ENCODE measurements at regions of chr13 and their contacts with region 1.

Region 1: DNA sequence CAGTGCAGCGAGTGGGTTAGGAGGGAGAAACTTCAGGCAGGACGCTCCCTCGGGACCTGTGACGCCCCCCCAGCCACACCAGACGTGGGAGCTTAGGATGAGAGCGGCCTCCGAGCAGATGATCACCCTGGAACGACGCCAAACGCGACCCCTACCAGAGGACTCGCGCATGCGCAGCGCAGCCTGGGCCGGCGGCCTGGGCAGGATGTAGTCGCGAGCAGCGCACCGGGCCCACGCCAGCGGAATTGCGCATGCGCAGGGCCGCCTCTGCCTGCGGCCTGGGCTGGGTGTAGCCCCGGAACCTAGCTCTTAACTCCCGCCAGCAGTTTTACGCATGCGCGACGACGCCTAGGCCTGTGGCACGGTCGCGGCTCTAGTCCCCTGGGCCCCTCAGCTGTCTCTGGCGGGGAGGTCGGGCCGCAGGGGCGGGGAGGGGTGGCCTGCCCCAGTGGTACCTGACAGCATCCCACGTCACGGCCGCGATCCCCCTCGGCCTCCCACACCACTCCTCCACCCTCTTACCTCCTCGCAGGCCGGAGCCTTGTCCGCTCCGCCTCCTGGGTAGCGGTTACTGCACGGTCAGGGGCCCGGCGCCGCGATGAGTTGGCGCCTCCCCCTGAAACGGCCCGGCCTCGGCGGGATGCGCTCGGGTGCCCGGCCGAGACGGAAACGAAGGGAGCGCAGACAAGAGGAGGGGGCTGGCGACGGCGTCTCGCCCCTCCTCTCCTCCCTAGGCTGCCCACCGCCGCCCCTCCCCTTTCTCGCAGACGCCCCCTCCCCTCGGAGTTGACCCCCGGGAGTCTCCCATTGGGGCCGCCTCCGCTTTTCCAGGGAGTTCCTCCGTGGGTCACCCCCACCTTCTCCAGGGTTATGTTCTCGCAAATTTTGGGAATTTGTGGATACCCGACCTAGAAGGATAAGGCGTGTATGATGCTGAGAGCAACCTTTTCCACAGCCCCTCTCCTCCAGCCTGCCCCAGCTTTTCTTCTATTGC is at the start of gene RCBTB2:
- DNase-seq: peak; percentile 99
- H3K4me3 Mint-ChIP-seq: peak within 1 kb of the TSS; percentile 91
- H3K27ac Mint-ChIP-seq: peak within 1 kb of the TSS; percentile 98
- H3K4me1 Mint-ChIP-seq: peaks cover 32% of the 10 kb centered on the region
- H3K27me3 Mint-ChIP-seq: peaks cover 7% of the 10 kb centered on the region
- total RNA-seq, gene RCBTB2: 1.7 and 2.0 TPM in 2 replicates

Region 2: GRCh38 chr13:48094781-48095502 is 437.9 kb before region 1 on chr13 and contains the start of gene MED4:
- intact Hi-C with region 1: loop called (anchors 2 kb)
- DNase-seq: peak; percentile 98
- H3K4me3 Mint-ChIP-seq: peak within 1 kb of the TSS; percentile 98
- H3K27ac Mint-ChIP-seq: peak within 1 kb of the TSS; percentile 90
- H3K4me1 Mint-ChIP-seq: peaks cover 36% of the 10 kb centered on the region
- H3K27me3 Mint-ChIP-seq: peaks cover 5% of the 10 kb centered on the region
- total RNA-seq, gene MED4: 64.2 and 65.6 TPM in 2 replicates

Region 3: DNA sequence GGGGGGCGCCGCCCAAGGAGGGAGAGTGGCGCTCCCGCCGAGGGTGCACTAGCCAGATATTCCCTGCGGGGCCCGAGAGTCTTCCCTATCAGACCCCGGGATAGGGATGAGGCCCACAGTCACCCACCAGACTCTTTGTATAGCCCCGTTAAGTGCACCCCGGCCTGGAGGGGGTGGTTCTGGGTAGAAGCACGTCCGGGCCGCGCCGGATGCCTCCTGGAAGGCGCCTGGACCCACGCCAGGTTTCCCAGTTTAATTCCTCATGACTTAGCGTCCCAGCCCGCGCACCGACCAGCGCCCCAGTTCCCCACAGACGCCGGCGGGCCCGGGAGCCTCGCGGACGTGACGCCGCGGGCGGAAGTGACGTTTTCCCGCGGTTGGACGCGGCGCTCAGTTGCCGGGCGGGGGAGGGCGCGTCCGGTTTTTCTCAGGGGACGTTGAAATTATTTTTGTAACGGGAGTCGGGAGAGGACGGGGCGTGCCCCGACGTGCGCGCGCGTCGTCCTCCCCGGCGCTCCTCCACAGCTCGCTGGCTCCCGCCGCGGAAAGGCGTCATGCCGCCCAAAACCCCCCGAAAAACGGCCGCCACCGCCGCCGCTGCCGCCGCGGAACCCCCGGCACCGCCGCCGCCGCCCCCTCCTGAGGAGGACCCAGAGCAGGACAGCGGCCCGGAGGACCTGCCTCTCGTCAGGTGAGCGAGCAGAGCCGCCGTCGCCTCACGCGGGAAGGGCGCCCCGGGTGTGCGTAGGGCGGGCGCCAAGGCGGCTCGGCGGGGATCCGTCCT is 229.3 kb before region 1 on chr13 and contains the start of gene RB1:
- intact Hi-C with region 1: loop called (anchors 1 kb)
- DNase-seq: peak; percentile 88
- H3K4me3 Mint-ChIP-seq: peak within 1 kb of the TSS; percentile 99
- H3K27ac Mint-ChIP-seq: peak within 1 kb of the TSS; percentile 97
- H3K4me1 Mint-ChIP-seq: peaks cover 30% of the 10 kb centered on the region
- H3K27me3 Mint-ChIP-seq: no peaks in the 10 kb centered on the region
- total RNA-seq, gene RB1: 26.5 and 28.6 TPM in 2 replicates

Region 4: DNA sequence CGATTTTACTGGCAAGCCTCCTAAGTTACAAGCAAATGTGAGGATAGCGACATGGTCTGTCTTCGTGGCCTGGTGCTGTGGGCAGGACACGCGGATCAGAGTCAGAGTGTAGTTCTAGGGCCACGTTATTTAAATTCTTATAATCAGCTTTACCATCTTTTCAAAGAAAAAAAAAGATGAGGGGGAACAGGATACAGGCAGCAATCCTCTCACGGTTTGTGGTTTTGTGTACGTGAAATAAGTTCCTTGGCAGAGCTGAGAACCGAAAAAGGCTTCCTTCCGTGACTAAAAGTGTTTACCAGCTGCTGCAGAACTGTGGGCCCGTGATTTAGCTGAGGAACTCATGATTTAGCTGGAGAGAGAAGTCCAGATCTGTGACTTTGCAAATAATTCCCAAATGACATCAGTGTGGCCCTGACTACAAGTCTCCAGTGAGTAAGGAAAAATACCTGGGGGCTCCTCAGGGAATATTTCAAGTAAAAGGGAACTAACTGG is 27.2 kb before region 1 on chr13:
- intact Hi-C with region 1: loop called (anchors 1 kb)
- DNase-seq: peak; percentile 57
- H3K4me3 Mint-ChIP-seq: peak overlapping the region; percentile 38
- H3K27ac Mint-ChIP-seq: peak overlapping the region; percentile 62
- H3K4me1 Mint-ChIP-seq: peaks cover 68% of the 10 kb centered on the region
- H3K27me3 Mint-ChIP-seq: peaks cover 4% of the 10 kb centered on the region

Region 5: DNA sequence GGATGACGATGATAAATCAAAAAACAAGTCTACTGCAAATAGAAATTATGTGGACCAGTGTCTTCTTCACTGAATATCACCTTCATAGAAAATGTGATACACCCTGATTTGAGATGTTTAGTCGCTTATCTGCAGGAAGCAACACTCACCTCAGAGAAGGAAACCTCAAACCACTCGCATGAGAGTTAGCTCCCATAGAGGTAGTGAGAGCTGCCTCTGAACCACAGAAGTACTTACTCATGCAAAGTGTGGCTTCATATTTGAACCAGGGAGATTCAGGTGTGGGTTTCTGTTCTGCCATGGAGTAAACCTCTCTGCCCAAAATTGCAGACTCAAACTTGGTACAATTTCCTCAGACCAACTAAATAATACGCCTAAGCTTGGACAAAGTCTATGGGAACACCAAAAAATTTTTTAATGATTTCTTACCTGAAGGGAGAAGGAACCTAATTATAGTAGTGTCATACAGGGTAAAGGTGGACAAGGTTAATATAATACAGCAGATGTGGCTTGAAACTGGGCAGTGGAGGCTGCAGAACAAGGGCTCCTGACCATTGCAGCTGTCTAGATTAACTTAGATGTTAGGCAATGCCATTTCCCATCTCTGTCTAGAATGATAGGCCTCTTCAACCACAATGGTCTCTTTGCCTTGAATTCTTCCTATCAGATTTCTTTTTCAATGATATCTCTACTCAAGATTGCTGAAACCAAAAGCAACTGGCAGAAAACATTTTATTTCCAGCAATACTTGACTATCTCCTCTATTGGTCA is 29.7 kb after region 1 on chr13:
- intact Hi-C with region 1: loop called (anchors 1 kb)
- DNase-seq: peak; percentile 77
- H3K4me3 Mint-ChIP-seq: no peak overlapping the region
- H3K27ac Mint-ChIP-seq: no peak overlapping the region
- H3K4me1 Mint-ChIP-seq: peaks cover 59% of the 10 kb centered on the region
- H3K27me3 Mint-ChIP-seq: peaks cover 68% of the 10 kb centered on the region

Region 6: GRCh38 chr13:48580185-48580803 is 47.5 kb after region 1 on chr13:
- intact Hi-C with region 1: loop called (anchors 2 kb)
- DNase-seq: peak; percentile 44
- H3K4me3 Mint-ChIP-seq: no peak overlapping the region
- H3K27ac Mint-ChIP-seq: no peak overlapping the region
- H3K4me1 Mint-ChIP-seq: peaks cover 16% of the 10 kb centered on the region
- H3K27me3 Mint-ChIP-seq: peaks cover 63% of the 10 kb centered on the region

Measured in activated T-helper 1 cell treated with anti-CD3 and anti-CD28 coated beads, Interleukin-12 subunit alpha, Interleukin-12 subunit beta, Interleukin-2, Interleukin-4 antibody, amounts not matched to agents 30 ng/mL and 10 ng/mL and 1 ng/mL, durations not matched to agents 14 hours and 24 hours and 36 hours (primary cell).